Activated CD4-positive, alpha-beta T cell treated with anti-CD3 and anti-CD28 coated beads, Interleukin-2, amount 10 ng/mL, durations not matched to agents 24 days and 14 days (primary cell): ENCODE measurements at regions of chr3 and their contacts with region 1.

Region 1: DNA sequence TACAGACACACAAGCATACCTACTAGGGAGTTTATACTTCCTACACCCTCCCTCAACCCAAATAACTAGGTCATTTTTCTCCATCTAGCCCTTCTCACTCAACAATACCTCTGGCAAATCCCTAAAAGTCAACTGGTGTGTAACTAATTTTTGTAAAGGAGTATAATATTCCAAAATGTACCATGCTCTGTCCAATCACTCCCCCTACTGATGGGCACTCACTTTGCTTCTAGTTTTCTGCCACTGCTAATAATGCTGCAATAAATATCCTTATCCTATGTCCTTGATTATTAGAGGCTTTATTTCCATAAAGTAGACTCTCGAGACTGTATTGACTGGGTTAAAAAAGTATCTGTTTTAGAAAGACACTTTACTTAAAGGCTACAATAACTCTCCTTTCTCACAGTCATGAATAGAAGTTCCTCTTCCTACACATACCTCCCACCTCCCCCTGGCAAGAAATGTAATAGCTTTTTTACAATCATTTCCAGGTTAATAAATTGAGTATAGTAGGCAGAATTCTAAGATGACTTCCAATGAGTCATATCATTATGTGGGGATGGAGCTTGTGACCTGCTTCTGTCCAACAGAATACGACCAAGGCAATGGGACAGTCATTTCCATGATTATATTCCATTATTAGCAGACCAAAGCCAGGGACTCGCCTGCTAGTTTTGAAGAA is 30.0 kb downstream of the SHQ1 start:
- DNase-seq: no peak
- H3K4me3 Mint-ChIP-seq: no peak overlapping the region
- H3K27ac Mint-ChIP-seq: peak overlapping the region; percentile 18
- H3K4me1 Mint-ChIP-seq: peaks cover 22% of the 10 kb centered on the region
- H3K27me3 Mint-ChIP-seq: no peaks in the 10 kb centered on the region

Region 2: DNA sequence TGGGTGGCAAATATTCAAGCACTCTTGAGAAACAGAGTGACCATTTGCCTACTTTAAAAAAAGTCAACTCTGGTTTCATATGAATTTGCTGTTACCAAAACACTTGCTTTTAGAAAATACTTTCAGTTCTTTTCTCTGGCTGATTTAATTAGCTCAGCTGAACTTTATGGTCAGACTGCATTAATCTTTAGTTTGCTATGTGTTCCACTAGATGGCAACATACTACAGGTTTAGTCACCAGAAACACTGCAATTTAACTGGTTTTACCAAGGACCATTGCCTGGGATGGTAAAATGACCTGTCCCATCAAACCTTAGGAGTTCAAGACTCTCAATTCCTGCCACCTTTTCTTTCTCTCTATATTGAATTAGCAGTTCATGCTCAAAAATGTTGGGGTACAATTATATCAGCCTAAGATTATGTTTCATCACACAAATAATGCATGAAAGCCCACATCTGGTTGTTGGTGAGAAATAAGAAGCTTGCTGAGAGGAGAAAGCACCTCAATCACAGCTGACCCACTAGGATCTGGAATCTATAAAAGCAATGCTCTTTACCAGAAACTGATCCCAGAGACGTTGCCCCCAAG is 1107.2 kb before region 1 on chr3:
- intact Hi-C with region 1: loop called (anchors 5 kb)
- DNase-seq: peak; percentile 70
- H3K4me3 Mint-ChIP-seq: no peak overlapping the region
- H3K27ac Mint-ChIP-seq: no peak overlapping the region
- H3K4me1 Mint-ChIP-seq: peaks cover 52% of the 10 kb centered on the region
- H3K27me3 Mint-ChIP-seq: no peaks in the 10 kb centered on the region

Region 3: GRCh38 chr3:71930056-71930991 is 887.9 kb before region 1 on chr3:
- intact Hi-C with region 1: loop called (anchors 2 kb)
- DNase-seq: peak; percentile 60
- H3K4me3 Mint-ChIP-seq: no peak overlapping the region
- H3K27ac Mint-ChIP-seq: no peak overlapping the region
- H3K4me1 Mint-ChIP-seq: peaks cover 4% of the 10 kb centered on the region
- H3K27me3 Mint-ChIP-seq: no peaks in the 10 kb centered on the region

Region 4: DNA sequence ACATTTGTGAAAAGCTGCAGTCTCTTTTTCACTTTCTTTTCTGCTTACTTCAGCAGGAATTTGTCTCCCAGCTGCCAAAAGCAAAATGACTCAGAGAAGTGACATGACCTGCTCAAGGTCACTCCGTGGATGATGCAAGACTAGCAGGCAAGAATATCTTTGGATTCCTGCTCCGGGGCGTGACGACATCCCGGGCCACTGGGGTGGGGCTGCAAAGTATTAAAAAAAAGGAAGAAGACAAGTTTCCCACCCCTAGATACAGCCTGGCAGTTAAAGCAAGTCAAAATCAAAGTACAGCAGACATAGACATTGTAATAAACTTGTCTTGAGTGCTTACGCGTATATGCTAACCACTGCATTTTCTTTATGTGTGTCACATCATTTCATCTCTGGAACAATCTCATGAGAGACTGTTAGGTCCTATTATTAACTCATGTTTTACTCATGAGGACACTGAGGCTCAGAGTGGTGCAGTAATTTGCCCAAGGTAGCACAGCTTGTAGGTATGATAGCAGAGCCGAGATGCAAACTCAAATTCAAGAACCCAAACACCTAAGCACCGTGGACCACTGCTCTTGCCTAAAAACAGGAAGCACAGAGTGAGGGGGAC is 548.1 kb before region 1 on chr3:
- intact Hi-C with region 1: loop called (anchors 5 kb)
- DNase-seq: peak; percentile 65
- H3K4me3 Mint-ChIP-seq: peak overlapping the region; percentile 12
- H3K27ac Mint-ChIP-seq: peak overlapping the region; percentile 67
- H3K4me1 Mint-ChIP-seq: peaks cover 57% of the 10 kb centered on the region
- H3K27me3 Mint-ChIP-seq: no peaks in the 10 kb centered on the region

Region 5: DNA sequence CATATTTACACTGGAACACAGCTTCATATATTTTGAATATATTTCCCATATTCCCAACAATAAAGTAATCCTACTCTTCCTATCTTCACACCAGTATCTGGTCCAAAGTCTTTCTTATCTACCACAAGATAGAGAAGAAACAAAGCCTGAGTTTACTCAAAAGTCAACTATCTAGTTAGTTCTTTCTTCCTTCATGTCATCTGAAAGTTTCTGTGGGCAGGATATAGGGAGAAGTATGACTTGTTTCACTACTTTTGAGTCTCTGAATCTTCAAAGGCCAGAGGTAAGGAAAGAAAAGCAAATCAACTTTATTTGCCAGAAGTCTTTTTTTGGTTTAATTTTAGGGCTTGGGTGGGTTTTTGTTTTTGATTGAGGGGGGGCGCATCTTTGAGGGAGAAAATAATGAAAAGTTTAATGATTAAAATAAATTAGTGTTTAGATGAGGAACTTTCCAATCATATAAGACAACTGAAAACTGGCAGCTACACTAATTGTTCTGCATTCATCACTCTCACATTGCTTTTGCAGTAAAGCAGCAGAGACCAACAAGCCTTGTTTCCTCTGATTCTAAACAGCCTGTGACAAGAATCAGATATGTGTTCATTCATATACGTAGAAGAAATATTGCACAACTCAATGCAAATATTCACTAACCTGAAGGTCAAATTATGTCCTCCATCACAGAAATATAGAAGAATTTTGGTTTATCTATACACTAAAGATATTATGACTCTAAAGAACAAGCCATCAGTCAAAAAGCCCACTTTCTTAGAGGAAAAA is 391.4 kb before region 1 on chr3:
- intact Hi-C with region 1: loop called (anchors 5 kb)
- DNase-seq: no peak
- H3K4me3 Mint-ChIP-seq: peak overlapping the region; percentile 55
- H3K27ac Mint-ChIP-seq: peak overlapping the region; percentile 90
- H3K4me1 Mint-ChIP-seq: peaks cover 59% of the 10 kb centered on the region
- H3K27me3 Mint-ChIP-seq: no peaks in the 10 kb centered on the region

Region 6: GRCh38 chr3:72523429-72524151 is 294.6 kb before region 1 on chr3:
- intact Hi-C with region 1: loop called (anchors 1 kb)
- DNase-seq: no peak
- H3K4me3 Mint-ChIP-seq: no peak overlapping the region
- H3K27ac Mint-ChIP-seq: peak overlapping the region; percentile 91
- H3K4me1 Mint-ChIP-seq: peaks cover 36% of the 10 kb centered on the region
- H3K27me3 Mint-ChIP-seq: no peaks in the 10 kb centered on the region

Region 7: DNA sequence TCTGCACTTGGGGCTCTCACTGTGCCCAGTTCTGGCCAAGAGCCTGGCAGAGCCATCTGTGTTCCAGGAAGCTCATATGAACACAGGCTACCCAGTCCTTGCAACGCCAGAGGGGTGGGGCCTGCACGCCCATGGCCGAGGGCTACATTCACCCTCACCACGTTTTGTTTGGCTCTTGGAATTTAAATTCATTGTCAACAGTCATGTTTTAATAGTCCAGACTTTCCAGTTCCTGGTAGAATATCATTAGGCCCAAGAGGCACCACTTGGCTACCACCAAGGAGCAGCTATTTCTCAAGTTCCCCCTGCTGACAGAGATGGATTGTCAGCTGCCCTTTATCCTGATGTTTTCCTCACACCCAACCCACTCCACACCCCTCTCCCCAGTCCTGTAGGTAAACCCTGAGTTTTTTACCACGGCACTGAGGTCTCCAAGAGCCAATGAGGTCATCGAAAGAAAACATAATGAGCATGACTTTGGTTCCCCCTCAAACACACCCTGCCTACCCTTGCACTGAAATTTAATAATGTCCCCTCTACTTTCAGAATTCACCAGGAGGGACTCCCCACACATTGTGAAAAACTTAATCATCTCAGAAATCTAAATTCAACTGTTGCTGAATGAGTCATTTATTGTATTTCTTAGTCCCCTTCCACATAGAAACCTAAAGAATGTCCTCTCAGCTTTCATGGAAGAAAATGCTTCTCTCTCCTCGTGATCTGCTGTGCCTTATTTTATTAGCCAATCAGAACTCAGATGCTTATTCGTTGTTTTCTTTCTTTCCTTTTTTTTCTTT is 95.1 kb before region 1 on chr3:
- intact Hi-C with region 1: loop called (anchors 5 kb)
- DNase-seq: no peak
- H3K4me3 Mint-ChIP-seq: no peak overlapping the region
- H3K27ac Mint-ChIP-seq: peak overlapping the region; percentile 70
- H3K4me1 Mint-ChIP-seq: peaks cover 9% of the 10 kb centered on the region
- H3K27me3 Mint-ChIP-seq: no peaks in the 10 kb centered on the region

Region 8: GRCh38 chr3:73502609-73503583 is 684.7 kb after region 1 on chr3:
- intact Hi-C with region 1: no loop called
- DNase-seq: peak; percentile 80
- H3K4me3 Mint-ChIP-seq: no peak overlapping the region
- H3K27ac Mint-ChIP-seq: no peak overlapping the region
- H3K4me1 Mint-ChIP-seq: no peaks in the 10 kb centered on the region
- H3K27me3 Mint-ChIP-seq: peaks cover 4% of the 10 kb centered on the region